RWPE1 (cell line): ENCODE measurements at regions of chr1 and their contacts with region 1.

Region 1: GRCh38 chr1:32521165-32521564 is 18.1 kb upstream of the ZBTB8A start:
- DNase-seq: no peak
- H3K27ac ChIP-seq: no peak overlapping the region
- CTCF ChIP-seq: no peak

Region 2: DNA sequence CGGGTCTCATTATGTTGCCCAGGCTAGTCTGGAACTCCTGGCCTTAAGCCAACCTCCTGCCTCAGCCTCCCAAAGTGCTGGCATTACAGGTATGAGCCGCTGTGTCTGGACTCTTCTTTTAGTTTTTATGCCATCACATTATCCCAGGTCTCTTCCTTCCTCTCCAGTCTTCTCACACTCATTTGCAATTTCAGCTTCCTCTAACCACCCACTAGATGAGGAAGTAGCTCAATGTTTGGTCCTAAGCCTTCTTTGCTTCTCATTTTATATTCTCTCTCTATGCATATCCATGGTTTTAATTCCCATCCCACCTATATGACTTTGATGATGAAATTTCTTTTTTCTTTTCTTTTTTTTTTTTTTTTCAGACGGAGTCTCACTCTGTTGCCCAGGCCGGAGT is 15.0 kb after region 1 on chr1:
- CTCF ChIA-PET with region 1: interaction called, 10 read pairs
- POLR2A ChIA-PET with region 1: interaction called, 4 read pairs
- DNase-seq: no peak
- H3K27ac ChIP-seq: no peak overlapping the region
- CTCF ChIP-seq: no peak

Region 3: GRCh38 chr1:32753532-32754312 is 232.6 kb after region 1 on chr1:
- CTCF ChIA-PET with region 1: no interaction called
- POLR2A ChIA-PET with region 1: no interaction called
- DNase-seq: peak; percentile 94
- H3K27ac ChIP-seq: peak overlapping the region; percentile 100
- CTCF ChIP-seq: no peak